ENCODE measurements at regions of chr18 and their contacts with region 1.

Region 1: DNA sequence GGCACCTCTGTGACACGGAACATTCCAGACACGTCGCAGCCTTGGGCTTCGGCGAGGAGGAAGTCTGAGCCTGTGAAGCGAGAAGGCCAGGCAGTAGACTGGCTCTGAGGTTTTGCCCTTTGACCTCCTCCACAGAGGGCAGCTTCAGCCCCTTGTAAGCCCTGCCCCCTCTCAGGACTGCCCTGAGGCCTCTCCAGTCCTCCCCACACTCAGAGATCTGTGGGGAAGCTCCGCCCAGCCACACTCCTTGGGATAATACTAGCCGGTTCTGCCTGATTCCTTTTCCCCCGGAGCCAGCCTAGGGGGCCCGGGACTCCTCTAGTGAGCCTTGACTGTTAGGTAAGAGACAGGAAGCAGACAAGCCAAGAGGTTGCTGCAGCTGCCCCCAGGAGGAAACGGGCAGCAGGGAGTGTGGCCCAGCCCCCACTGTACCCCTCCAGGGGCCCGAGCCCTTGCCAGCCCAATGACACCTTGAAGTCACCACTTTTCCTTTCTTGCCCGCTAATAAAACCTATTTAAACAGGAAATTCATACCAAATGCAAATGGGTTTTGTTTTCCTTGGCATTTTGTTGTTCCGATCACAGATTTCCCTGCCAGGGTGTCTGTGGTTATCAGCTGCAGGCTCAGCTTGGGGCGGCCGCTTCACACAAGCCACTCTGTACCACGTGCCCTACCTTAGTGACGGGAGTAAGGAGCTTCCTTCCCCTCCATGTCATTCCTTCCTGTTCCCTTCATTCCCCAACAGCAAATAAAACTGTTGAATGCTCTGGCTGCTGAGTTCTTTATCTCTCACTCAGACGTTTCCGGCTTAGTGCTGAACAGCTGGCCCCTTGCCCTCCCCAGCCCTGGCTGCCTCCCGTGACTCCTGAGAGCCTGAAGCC is 124.7 kb downstream of the CABLES1 start:
- DNase-seq: no peak
- ATAC-seq: peak; percentile 84
- H3K4me3 ChIP-seq: peak overlapping the region in 1 of 2 experiments; percentile 32; a peak in 2 of 4 replicates
- H3K27ac ChIP-seq: peak overlapping the region; percentile 91
- H3K4me1 ChIP-seq: peaks cover 58% of the 10 kb centered on the region
- H3K27me3 ChIP-seq: no peaks in the 10 kb centered on the region
- CTCF ChIP-seq: no peak

Region 2: DNA sequence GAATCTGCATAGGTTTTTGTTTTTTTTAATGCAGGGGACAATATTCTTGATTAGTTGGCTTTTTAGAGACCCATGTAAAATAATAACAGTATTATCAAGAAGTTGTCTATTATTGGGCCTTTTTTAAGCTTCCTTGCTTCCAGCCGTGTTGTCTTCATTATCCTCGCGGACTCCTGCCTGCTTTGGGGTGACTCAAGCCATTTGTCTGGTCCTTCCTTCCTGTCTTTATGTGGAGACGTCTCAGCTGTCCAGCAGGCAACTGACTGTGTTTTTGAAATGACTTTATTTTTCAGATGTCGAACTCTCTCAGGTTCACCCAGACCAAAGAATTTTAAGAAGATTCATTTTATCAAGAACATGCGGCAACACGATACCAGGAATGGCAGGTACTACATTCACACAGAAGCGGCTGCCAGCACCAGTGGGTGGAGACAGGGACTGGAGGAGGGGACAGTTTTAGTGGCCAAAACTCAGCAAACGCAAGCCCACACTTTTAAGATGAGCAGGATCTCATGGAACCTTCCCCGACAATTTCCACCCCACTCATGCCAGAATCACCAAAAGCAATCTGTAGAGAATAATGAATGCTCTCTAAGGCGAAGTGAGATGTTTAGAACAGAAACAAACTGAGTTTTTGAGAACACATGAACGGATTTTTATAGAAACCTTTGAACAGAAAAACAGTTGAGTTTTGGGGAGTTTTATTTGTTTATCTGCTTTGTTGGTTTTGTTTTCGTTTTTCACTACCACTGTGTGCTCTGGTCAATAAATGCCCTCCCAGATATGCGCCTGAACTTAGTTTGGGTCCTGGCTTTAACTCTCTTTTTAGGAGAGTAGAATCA is 65.6 kb before region 1 on chr18:
- CTCF ChIA-PET with region 1: no interaction called
- POLR2A ChIA-PET with region 1: no interaction called
- in situ Hi-C with region 1: no loop called
- intact Hi-C with region 1: no loop called
- DNase-seq: no peak
- ATAC-seq: no peak
- H3K4me3 ChIP-seq: no peak overlapping the region
- H3K27ac ChIP-seq: no peak overlapping the region
- H3K4me1 ChIP-seq: no peaks in the 10 kb centered on the region; the same call in 1 of the 2 replicates
- H3K27me3 ChIP-seq: no peaks in the 10 kb centered on the region
- CTCF ChIP-seq: no peak

Region 3: DNA sequence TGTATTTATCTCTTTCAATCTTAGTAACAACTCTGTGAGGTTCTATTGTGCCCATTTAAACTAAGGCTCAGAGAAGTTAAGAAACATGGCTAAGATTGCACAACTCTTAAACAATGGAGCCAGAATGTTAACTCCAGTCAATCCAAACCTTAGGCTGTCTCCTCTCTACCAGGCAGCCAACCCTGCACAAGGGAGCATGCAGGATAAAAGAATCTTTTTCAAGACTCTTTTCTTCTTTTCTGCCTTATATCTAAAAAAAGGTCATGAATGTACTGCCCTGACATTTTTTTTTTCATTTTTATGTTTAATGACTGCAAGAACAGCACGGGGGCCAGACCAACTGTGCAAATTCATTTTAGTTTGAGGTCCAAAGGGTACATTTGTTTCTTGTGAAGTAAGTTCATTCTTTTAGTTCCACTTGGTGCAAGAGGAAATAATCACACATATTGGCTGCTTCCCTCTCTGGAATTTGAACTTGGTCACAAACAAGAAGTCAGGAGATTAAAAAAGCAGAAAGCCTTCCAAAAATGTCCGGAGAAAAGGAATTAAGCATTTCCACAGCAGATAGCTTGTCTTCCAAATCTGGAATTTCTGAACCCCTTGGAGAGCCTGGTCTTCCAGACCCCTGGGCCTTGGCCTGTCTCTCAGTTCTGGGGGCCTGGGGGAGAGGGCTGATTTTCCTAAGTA is 97.1 kb after region 1 on chr18:
- CTCF ChIA-PET with region 1: no interaction called
- POLR2A ChIA-PET with region 1: no interaction called
- in situ Hi-C with region 1: no loop called
- intact Hi-C with region 1: loop called (anchors 10 kb)
- DNase-seq: no peak
- ATAC-seq: no peak
- H3K4me3 ChIP-seq: no peak overlapping the region
- H3K27ac ChIP-seq: peak overlapping the region; percentile 70
- H3K4me1 ChIP-seq: peaks cover 5% of the 10 kb centered on the region; the same call in 1 of the 2 replicates
- H3K27me3 ChIP-seq: no peaks in the 10 kb centered on the region
- CTCF ChIP-seq: no peak

Region 4: DNA sequence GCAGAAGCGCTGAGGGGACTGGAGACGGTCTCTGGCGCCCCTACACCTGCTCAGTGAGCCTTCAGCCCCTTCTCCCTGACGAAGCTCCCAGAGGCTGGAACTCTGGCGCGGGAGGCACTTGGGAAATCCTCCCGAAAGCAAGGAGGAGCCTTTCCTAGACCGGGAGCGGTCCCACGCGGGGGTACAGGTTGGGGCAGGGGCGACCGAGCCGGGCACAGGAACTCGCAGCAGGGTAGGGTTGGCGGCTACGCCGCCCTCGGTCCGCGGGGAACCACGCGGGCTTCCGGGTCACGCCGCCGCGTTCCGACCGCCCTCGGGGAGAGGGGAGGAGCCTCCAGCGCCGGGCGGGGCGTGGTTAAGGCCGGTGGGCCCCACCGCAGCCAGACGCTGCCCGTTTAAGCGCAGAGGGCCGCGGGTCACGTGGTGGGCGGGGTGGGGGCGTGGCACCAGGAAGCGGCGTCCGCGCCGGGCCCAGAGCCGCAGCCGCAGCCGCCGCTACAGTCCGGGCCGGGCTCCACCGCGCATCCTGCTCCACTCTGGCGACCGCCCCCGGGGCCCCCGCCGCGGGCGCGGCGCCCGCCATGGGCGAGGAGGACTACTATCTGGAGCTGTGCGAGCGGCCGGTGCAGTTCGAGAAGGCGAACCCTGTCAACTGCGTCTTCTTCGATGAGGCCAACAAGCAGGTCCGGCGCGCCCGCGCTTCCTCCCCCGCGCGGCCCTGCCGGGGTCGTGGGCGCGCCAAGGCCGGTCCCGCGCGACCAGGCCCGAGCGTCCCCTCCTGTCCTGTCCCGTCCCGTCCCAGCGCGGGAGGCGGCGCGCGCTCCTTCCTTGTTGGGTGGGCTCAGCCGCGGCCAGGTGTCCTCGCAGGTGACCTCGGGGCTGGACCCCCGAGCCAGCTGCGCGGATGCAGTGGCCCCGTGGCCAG is 243.4 kb after region 1 on chr18 and contains the start of gene RMC1:
- CTCF ChIA-PET with region 1: interaction called, 16 read pairs
- POLR2A ChIA-PET with region 1: no interaction called
- in situ Hi-C with region 1: no loop called
- intact Hi-C with region 1: no loop called
- DNase-seq: no peak
- ATAC-seq: peak; percentile 94
- H3K4me3 ChIP-seq: peak within 1 kb of the TSS; percentile 81 to 90
- H3K27ac ChIP-seq: peak within 1 kb of the TSS; percentile 92
- H3K4me1 ChIP-seq: peaks cover 15% of the 10 kb centered on the region
- H3K27me3 ChIP-seq: no peaks in the 10 kb centered on the region
- CTCF ChIP-seq: peak; percentile 50; the same call in 1 of the 2 replicates
- total RNA-seq, gene RMC1: 57.4 TPM

Measured in Panc1 (cell line).